Gastrocnemius medialis (tissue), 4 donors: ENCODE measurements at regions of chr16 and their contacts with region 1.

Region 1: DNA sequence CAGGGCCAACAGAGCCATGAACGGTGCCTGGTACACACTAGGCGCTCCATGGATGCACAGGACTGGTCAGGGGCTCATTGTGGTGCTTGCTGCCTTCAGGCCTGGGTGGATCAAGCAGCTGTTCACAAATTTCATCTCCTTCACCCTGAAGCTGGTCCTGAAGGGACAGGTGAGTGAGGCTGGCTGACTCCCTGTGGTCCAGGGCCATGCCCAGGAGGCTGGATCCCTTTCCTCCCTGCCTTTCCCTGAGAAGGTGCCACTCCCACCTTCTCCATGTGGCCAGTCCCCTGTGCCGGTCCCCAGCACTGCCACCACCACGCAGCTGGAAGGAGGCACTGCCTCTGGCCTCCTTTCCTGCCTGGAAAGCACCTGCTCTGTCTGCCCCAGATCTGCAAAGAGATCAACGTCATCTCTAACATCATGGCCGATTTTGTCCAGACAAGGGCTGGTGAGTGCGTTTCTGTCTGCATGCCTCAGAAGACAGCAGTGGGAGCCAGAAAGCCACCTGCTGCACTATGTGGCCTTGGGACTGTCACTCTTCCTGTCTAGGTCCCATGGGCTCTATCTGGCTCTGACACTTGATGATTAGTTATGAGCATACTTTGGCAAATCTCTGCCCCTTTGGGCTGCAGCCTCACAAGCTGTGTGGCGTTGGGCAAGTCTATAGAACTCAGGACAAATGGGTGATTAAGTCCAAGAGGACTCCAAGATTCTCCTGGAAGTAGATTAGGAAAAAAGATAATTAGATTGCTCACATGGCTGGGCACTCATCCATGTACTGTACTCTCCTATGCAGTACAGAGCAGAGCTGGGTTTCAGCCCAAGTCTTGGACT is 9.4 kb downstream of the CETP start:
- DNase-seq: no peak
- ATAC-seq: no peak
- H3K4me3 ChIP-seq: no peak overlapping the region
- H3K27ac ChIP-seq: no peak overlapping the region
- H3K4me1 ChIP-seq: no peaks in the 10 kb centered on the region
- H3K27me3 ChIP-seq: no peaks in the 10 kb centered on the region
- CTCF ChIP-seq: no peak
- POLR2A ChIP-seq: no peak

Region 2: DNA sequence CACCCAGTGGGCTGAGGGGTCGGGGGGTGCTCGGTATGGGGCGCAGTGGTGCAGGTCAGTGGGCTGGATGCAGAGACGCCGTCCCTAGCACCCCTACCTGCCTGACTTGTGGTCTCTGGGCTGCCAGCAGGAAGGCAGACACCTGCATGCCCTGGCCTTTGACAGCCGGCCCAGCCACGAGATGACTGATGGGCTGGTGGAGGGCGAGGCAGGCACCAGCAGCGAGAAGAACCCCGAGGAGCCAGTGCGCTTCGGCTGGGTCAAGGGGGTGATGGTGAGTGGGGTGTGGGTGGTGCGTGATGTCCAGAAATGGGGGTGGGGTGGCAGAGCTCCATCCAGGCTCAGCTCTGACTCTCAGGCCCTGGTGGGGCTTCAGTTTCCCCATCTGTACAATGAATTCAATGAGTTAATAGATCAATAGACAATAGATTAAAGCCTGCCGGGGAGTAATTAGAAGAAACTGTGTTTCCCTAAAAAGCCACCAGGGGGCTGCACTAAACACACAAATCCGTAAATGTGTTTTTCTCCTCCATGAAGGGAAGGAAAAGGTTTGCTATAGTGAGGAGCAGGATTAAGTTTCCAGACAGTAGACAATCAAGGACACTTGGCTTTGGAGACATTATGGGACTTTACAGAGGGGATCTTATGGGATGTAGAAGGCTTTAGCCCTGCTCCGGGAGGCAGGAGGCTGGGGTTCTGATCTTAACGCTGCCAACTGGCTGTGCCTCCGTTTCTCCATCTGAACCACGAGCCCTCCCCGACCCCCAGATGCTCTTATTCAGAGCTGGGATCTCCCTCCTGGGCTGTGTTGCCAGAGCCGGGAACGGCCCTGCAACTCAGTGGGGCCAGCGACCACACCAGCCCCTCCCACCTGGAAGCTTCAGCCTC is 104.0 kb before region 1 on chr16:
- in situ Hi-C with region 1: no loop called
- intact Hi-C with region 1: no loop called
- DNase-seq: no peak
- ATAC-seq: peak; percentile 59 to 74
- H3K4me3 ChIP-seq: no peak overlapping the region
- H3K27ac ChIP-seq: peak overlapping the region in 1 of 4 donors; percentile 14
- H3K4me1 ChIP-seq: peaks cover 5 to 6% of the 10 kb centered on the region in 2 donors
- H3K27me3 ChIP-seq: no peaks in the 10 kb centered on the region
- CTCF ChIP-seq: peak; percentile 69 to 74 (median 72)
- POLR2A ChIP-seq: no peak

Region 3: GRCh38 chr16:57039148-57039812 is 68.1 kb after region 1 on chr16:
- in situ Hi-C with region 1: loop called in 1 of 4 experiments (anchors 10 kb)
- intact Hi-C with region 1: no loop called
- DNase-seq: no peak
- ATAC-seq: no peak
- H3K4me3 ChIP-seq: no peak overlapping the region
- H3K27ac ChIP-seq: peak overlapping the region in 1 of 4 donors; percentile 9
- H3K4me1 ChIP-seq: no peaks in the 10 kb centered on the region
- H3K27me3 ChIP-seq: no peaks in the 10 kb centered on the region
- CTCF ChIP-seq: no peak
- POLR2A ChIP-seq: no peak